Pancreas (tissue), 10 donors: ENCODE measurements at regions of chr3 and their contacts with region 1.

Region 1: DNA sequence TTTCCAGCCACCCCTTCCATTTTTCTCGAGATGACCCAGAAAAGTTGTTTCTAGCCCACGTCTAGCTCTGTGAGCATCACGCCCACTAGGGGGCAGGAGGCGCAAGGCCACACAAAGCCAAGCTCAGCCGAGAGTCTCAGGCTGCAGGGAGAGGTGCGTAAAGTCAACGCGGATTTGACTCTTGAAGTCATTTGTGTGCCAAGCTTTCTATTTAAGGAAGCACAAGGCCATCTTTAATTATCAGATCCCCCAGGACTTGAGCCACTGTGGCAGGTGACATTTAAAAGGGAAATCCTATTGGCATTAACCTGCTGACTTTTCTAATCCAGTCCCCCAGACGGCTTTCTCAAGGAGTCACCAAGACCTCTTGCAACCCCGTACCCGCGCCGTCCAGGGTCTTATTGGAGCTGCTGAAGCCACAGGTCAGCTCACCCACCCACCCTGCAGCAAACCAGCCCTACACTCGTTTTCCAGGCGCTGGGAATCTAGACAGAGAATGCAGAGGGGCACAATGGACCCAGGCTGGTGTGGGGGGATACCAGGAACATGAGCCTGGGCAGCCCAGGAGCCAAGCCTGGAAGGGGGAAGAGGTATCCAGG is 62.1 kb downstream of the CAPN7 start:
- DNase-seq: peak; percentile 73 to 91 (median 86)
- ATAC-seq: peak; percentile 93 to 96 (median 94)
- H3K4me3 ChIP-seq: no peak overlapping the region
- H3K27ac ChIP-seq: no peak overlapping the region
- H3K4me1 ChIP-seq: peaks cover 0 to 11% (median 4%) of the 10 kb centered on the region in 3 donors
- H3K27me3 ChIP-seq: no peaks in the 10 kb centered on the region
- CTCF ChIP-seq: peak; percentile 79 to 89 (median 84)

Region 2: DNA sequence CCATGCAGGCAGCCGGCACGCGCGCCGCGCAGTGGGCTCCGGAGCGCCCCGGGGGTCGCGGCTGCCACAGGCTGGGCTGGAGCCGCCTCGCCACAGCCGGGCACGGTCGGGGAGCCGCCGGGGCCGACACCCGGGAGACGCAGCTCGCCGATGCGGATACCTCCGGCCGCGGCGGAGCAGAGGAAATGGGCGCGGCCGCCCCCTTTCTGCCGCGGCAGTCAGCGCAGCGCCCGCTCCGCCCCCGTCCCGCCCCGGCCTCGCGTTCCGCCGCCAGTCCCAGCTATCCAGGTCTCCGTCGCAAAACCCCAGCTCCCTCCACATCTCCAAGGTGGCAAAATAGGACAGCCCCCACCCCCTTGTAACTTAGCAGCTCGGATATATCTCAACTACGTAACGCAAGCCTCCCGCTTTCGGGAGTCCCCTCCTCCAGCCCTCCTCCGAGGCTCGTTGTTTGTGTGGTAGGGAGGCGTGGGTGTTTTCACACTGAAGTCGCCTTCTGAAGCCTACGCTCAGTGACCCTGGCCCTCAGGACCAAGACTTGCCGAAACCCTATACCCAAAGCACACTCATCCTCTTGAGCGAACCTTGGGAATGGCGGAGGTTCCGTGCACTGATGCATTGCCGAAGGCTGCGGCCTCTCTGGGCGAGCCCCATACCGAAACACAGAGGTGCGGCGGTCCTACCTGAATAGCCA is 64.4 kb after region 1 on chr3 and contains the start of gene SH3BP5:
- intact Hi-C with region 1: loop called in 2 of 3 experiments (anchors 5 kb)
- DNase-seq: peak; percentile 44 to 90 (median 74)
- ATAC-seq: peak; percentile 95 to 98 (median 98)
- H3K4me3 ChIP-seq: peak within 1 kb of the TSS; percentile 60 to 93 (median 80)
- H3K27ac ChIP-seq: peak within 1 kb of the TSS in 2 of 4 donors; percentile 44 to 46
- H3K4me1 ChIP-seq: peaks cover 0 to 7% (median 0%) of the 10 kb centered on the region in 3 donors
- H3K27me3 ChIP-seq: no peaks in the 10 kb centered on the region
- CTCF ChIP-seq: peak; percentile 56 to 72 (median 59)
- total RNA-seq, gene SH3BP5: 2.8 to 9.4 (median 5.6) TPM

Region 3: DNA sequence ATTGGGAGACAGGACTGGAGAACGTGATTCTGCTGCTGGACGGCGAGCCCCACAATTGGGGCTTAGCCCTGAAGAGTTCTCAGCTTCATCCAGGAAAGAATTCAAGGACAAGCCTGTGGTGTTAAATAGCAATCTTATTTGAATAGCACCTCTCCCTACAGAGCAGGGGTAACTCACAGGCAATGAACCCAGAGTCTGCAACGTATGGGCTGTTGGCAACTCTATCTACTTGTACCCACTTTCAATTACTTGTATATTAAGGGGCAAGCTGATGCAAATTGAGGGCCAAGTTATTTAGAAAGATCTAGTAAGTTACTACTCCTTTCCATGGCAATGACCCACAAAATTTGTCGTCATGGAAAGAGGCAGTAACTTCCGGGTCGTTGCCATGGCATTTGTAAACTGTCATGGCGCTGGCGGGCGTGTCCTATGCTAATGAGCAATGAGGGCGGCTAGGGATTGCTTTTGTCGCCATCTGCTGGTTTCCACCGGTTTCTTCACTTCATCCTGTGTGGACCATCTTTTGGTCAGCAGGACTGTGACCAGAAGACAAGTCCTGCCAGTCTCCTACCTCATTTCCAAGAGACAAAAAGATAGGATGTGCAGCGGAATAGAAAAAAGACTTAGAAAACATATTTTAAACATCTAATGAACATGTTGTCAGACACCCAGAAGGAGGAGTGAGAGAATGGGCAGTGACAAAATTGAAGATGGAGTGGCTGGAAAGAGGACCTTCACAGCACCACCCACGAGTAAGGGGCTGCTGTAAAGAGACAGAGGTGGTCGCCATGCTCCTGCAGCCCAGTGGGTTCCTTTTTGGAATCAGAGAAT is 110.0 kb after region 1 on chr3:
- intact Hi-C with region 1: loop called in 2 of 3 experiments (anchors 2 to 10 kb)
- DNase-seq: peak; percentile 89 to 95 (median 94)
- ATAC-seq: peak; percentile 99 to 100 (median 99)
- H3K4me3 ChIP-seq: no peak overlapping the region
- H3K27ac ChIP-seq: peak overlapping the region in 3 of 4 donors; percentile 23 to 82 (median 78)
- H3K4me1 ChIP-seq: no peaks in the 10 kb centered on the region
- H3K27me3 ChIP-seq: no peaks in the 10 kb centered on the region
- CTCF ChIP-seq: peak; percentile 66 to 77 (median 74)

Region 4: DNA sequence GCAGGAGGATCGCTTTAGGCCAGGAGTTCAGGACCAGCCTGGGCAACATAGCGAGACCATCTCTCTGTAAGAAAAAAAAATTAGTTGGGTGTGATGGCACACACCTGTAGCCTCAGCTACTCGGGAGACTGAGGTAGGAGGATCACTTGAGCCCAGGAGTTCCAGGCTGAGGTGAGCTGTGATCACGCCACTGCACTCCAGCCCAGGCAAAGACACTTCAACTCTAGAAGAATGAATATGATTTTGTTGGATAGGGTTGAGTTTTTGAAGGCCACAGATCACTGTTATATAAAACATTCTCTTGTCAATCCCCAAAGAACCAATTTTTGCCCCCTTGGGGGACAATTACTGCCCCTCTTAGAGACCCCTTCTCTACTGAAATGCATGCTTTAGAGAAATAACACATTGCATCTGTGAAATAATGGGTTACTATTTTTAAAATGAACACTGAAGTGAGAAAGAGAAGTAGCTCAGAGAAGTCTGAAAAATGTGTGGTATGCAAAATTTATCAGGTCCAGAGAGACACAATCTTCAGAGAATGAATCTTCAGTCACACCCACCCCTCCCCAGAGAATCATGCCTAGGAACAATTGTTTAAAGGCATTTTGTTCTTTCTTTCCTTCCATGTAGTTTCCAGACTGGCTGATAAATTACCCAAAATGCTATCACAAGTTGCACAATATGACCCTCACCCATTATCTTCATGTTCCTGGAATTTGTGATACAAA is 116.5 kb after region 1 on chr3:
- intact Hi-C with region 1: loop called in 2 of 3 experiments (anchors 2 to 10 kb)
- DNase-seq: no peak
- ATAC-seq: peak in 1 of 4 donors; percentile 26
- H3K4me3 ChIP-seq: no peak overlapping the region
- H3K27ac ChIP-seq: no peak overlapping the region
- H3K4me1 ChIP-seq: no peaks in the 10 kb centered on the region
- H3K27me3 ChIP-seq: no peaks in the 10 kb centered on the region
- CTCF ChIP-seq: no peak

Region 5: GRCh38 chr3:15557511-15557946 is 289.4 kb after region 1 on chr3:
- intact Hi-C with region 1: loop called in 1 of 3 experiments (anchors 10 kb)
- DNase-seq: peak in 3 of 6 donors; percentile 27 to 69 (median 46)
- ATAC-seq: peak; percentile 63 to 95 (median 94)
- H3K4me3 ChIP-seq: no peak overlapping the region
- H3K27ac ChIP-seq: no peak overlapping the region
- H3K4me1 ChIP-seq: peaks cover 0 to 8% (median 0%) of the 10 kb centered on the region in 3 donors
- H3K27me3 ChIP-seq: no peaks in the 10 kb centered on the region
- CTCF ChIP-seq: peak; percentile 22 to 63 (median 52)